HEK293 (cell line): ENCODE measurements at regions of chr9 and their contacts with region 1.

Region 1: GRCh38 chr9:114349713-114350480 is 20.2 kb downstream of the ORM2 start:
- H3K4me3 ChIP-seq: no peak overlapping the region
- H3K27ac ChIP-seq: 0 out of 2 replicates have a peak overlapping the region, but pooled peaks have one; percentile 24
- H3K4me1 ChIP-seq: peaks cover 8% of the 10 kb centered on the region
- CTCF ChIP-seq: no peak

Region 2: DNA sequence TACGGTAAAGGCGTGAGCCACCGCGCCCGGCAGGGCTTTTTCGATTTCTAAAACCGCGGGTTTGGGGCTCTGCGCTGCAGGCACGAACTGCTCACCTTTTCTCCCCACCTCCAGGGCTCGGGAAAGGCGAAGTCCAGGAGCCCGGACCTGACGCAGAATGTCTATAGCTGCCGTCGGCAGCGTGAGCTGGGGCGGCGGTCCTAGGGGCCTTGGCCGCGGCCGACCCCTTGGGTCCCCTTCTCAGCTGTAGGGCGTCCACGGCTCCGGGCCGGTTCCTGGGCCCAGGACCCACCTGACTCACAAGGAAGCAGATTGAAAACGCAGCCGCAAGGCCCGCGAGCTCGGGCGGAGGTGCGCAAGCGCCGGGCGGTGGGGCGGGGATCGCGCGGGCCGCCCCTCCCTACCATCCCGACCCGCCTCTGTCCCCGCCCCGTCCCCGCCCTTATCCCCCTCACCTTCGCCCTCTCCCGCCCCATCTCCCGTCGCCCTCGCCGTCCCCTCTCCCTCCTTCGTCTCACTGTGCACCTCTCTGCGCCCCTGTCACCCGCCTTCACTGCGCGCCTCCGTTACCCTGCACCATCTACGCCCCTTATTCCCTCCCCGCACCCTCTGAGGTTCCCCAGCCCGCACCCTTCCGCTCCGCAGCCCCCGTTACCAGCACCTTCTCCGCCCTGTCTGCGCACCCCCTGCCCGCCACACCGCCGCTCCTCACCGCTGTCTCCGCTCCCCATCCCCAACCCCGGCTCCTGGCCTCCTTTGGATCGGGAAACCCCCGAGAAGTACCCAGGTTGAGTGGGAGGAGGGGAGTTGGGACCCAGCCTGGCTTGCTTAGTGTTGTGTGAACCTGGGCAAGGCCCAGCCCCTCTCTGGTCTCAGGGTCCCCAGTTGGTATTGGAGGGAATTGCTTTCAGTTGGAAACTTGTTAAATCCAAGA is 973.0 kb before region 1 on chr9 and contains the start of gene HDHD3:
- CTCF ChIA-PET with region 1: no interaction called
- POLR2A ChIA-PET with region 1: no interaction called
- H3K4me3 ChIP-seq: peak within 1 kb of the TSS; percentile 64
- H3K27ac ChIP-seq: peak within 1 kb of the TSS; percentile 81
- H3K4me1 ChIP-seq: peaks cover 3% of the 10 kb centered on the region; the same call in 1 of the 2 replicates
- CTCF ChIP-seq: no peak

Region 3: GRCh38 chr9:114238891-114239875 is 110.7 kb before region 1 on chr9:
- CTCF ChIA-PET with region 1: no interaction called
- POLR2A ChIA-PET with region 1: no interaction called
- H3K4me3 ChIP-seq: no peak overlapping the region
- H3K27ac ChIP-seq: no peak overlapping the region
- H3K4me1 ChIP-seq: no peaks in the 10 kb centered on the region
- CTCF ChIP-seq: no peak

Region 4: GRCh38 chr9:114304416-114305188 is 45.3 kb before region 1 on chr9:
- CTCF ChIA-PET with region 1: no interaction called
- POLR2A ChIA-PET with region 1: no interaction called
- H3K4me3 ChIP-seq: no peak overlapping the region
- H3K27ac ChIP-seq: no peak overlapping the region
- H3K4me1 ChIP-seq: no peaks in the 10 kb centered on the region; the same call in 1 of the 2 replicates
- CTCF ChIP-seq: no peak

Region 5: DNA sequence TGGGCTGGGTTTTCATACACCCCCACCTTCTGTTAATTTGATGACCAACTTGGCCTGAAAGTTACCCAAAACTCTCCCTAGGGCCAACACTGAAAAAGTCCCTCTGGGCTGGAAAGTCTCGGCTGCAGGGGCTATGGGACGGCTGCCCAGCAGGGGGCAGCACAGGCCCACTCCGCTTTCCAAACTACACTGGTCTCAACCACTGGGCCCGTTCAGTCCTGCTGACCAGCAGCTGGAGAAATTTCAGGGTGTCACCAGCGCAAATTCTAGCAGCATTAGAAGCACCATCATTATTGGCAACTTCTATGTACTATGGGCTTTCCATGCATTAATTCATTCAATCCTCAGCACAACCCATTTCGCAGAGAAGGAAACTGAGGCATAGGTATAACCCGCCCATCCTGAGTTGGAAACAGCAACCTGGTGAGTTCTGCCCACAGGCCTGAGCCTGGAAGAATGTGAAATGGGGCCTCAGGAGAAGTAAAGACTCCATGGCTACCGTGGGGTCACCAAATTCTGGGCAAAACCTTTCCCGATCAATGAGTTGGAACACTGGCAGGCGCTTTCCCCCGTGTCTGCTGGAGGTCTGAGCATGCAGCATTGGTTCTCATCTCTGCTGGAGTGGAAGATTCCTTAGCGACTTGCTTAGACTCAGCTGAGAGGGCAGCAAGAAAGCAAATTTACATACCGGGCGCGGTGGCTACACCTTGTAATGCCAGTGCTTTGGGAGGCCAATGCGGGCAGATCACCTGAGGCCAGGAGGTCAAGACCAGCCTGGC is 10.6 kb before region 1 on chr9:
- CTCF ChIA-PET with region 1: interaction called, 17 read pairs
- POLR2A ChIA-PET with region 1: no interaction called
- H3K4me3 ChIP-seq: no peak overlapping the region
- H3K27ac ChIP-seq: no peak overlapping the region
- H3K4me1 ChIP-seq: no peaks in the 10 kb centered on the region
- CTCF ChIP-seq: peak; percentile 49